IMR-90 (cell line): ENCODE measurements at regions of chr3 and their contacts with region 1.

Region 1: GRCh38 chr3:51734572-51734907 is 27.7 kb downstream of the GRM2 start:
- DNase-seq: no peak
- ATAC-seq: no peak
- H3K4me3 ChIP-seq: no peak overlapping the region
- H3K27ac ChIP-seq: no peak overlapping the region
- H3K4me1 ChIP-seq: no peaks in the 10 kb centered on the region
- H3K27me3 ChIP-seq: no peaks in the 10 kb centered on the region; the same call in 1 of the 2 replicates
- CTCF ChIP-seq: no peak
- POLR2A ChIP-seq: no peak
- RAD21 ChIP-seq: no peak

Region 2: GRCh38 chr3:51887620-51888019 is 153.1 kb after region 1 on chr3:
- CTCF ChIA-PET with region 1: no interaction called
- POLR2A ChIA-PET with region 1: no interaction called
- dilution Hi-C with region 1: no loop called
- in situ Hi-C with region 1: no loop called
- intact Hi-C with region 1: no loop called
- DNase-seq: no peak
- ATAC-seq: no peak
- H3K4me3 ChIP-seq: no peak overlapping the region
- H3K27ac ChIP-seq: no peak overlapping the region
- H3K4me1 ChIP-seq: no peaks in the 10 kb centered on the region
- H3K27me3 ChIP-seq: peaks cover 2% of the 10 kb centered on the region
- CTCF ChIP-seq: no peak
- POLR2A ChIP-seq: no peak
- RAD21 ChIP-seq: no peak

Region 3: GRCh38 chr3:51908026-51908425 is 173.5 kb after region 1 on chr3:
- CTCF ChIA-PET with region 1: no interaction called
- POLR2A ChIA-PET with region 1: no interaction called
- dilution Hi-C with region 1: no loop called
- in situ Hi-C with region 1: no loop called
- intact Hi-C with region 1: loop called (anchors 10 kb)
- DNase-seq: no peak
- ATAC-seq: no peak
- H3K4me3 ChIP-seq: no peak overlapping the region
- H3K27ac ChIP-seq: no peak overlapping the region
- H3K4me1 ChIP-seq: no peaks in the 10 kb centered on the region
- H3K27me3 ChIP-seq: no peaks in the 10 kb centered on the region
- CTCF ChIP-seq: no peak
- POLR2A ChIP-seq: no peak
- RAD21 ChIP-seq: no peak